Endothelial cell of umbilical vein (primary cell): ENCODE measurements at regions of chr11 and their contacts with region 1.

Region 1: GRCh38 chr11:128434818-128435217 is 152.5 kb downstream of the ETS1 start:
- DNase-seq: no peak
- H3K4me3 ChIP-seq: no peak overlapping the region
- H3K27ac ChIP-seq: no peak overlapping the region
- H3K4me1 ChIP-seq: peaks cover 6% of the 10 kb centered on the region
- H3K27me3 ChIP-seq: no peaks in the 10 kb centered on the region
- CTCF ChIP-seq: no peak
- POLR2A ChIP-seq: no peak

Region 2: DNA sequence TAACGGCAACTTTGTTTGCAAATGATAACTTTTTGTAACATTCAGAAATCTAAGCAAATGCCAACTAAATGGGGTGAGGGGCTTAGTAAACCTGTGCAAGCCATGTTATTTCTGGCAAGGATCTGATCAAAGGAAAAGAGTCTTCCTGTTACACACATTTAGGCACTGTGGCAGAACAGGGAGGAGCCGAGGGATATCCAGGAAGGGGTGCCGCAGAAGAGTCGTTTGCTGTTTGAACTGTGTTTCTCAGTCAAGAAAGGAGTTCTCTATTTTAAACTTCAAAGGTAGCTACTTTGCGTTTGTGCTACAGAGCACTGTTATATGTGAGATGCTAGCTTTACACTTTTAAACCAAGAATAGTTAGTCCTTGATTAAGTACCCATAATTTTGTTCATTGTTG is 23.0 kb before region 1 on chr11:
- CTCF ChIA-PET with region 1: interaction called, 3 read pairs
- POLR2A ChIA-PET with region 1: no interaction called
- dilution Hi-C with region 1: no loop called
- intact Hi-C with region 1: loop called (anchors 2 kb)
- DNase-seq: peak; percentile 15
- H3K4me3 ChIP-seq: no peak overlapping the region
- H3K27ac ChIP-seq: no peak overlapping the region
- H3K4me1 ChIP-seq: peaks cover 2% of the 10 kb centered on the region
- H3K27me3 ChIP-seq: no peaks in the 10 kb centered on the region
- CTCF ChIP-seq: no peak
- POLR2A ChIP-seq: no peak